ENCODE measurements at regions of chr6 and their contacts with region 1.

Region 1: DNA sequence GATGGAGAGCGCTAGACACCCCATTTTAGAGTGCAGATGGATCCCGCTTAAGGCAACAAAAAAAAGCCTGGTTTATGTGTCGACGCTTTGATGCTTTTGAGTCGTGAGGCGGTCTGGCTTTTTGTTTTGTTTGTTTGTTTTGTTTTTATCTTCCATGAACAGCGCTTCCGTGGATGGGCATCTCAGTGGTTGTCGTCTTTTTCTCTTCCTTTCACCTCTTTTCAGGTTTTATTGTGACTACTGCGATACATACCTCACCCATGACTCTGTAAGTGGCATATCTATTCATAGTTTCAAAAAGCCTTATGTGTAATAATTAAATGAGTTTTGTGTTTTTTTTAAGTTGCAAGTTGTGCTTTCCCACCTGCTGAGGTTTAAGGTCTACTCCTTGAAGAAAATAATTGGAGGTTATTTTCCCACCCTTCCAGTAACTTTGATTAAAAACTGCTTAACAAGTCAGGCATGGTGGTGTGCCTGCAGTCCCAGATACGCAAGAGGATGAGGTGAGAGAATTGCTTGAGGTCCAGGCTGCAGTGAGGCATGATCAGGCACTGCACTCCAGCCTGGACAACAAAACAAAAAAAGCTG is 476 bp downstream of the SNRPC start:
- DNase-seq: no peak
- H3K4me3 Mint-ChIP-seq: no peak overlapping the region
- H3K27ac Mint-ChIP-seq: no peak overlapping the region
- H3K4me1 Mint-ChIP-seq: peaks cover 7% of the 10 kb centered on the region
- H3K27me3 Mint-ChIP-seq: no peaks in the 10 kb centered on the region

Region 2: DNA sequence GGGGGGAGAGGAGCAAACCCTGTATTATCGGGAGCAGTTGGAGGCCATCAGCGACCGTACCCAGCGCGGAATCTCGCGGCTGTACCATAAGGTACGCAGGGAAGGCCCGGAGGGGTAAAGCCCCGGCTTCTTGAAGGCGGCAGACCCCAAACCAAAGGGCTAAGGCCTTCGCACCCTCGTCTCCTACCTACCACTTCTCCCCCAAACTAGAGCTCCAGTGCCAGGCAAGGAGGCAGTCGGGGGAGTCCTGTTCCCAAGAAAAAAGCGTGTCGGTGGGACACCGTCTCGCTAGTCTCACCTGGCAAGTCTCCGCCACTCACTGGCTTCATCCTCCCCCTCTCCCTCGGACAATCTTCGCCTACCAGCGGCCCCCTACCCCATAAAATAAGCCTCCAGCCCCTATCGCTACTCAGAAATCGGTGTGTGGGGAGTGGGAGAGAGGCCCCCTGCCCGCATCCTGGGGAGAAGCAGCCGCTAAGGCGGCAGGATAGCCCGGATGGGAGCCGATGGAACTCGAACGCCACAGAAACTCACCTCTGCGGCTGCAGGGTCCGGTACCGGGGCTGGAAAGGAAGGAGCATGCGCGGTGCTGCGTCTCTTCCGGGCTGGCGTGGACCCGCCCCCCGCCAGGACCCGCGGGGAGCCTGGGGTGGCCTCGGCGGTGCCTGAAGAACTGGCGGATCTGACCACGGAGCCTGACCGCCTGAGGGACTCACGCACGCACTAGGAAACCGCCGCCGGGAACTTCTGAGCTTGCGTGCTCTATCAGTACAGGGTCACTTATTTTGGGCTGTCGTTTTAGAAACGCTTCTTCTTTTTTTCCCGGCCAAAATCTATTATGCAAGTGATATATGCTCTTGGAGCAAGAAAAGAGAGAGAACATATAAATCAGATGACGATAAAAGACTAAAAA is 332.0 kb before region 1 on chr6 and contains the start of gene RPS10:
- intact Hi-C with region 1: loop called (anchors 1 kb)
- DNase-seq: peak; percentile 88
- H3K4me3 Mint-ChIP-seq: peak within 1 kb of the TSS; percentile 99
- H3K27ac Mint-ChIP-seq: peak within 1 kb of the TSS; percentile 99
- H3K4me1 Mint-ChIP-seq: peaks cover 31% of the 10 kb centered on the region
- H3K27me3 Mint-ChIP-seq: peaks cover 4% of the 10 kb centered on the region
- total RNA-seq, gene RPS10: 1,492 and 1,525 TPM in 2 replicates

Region 3: GRCh38 chr6:34656378-34657036 is 101.3 kb before region 1 on chr6:
- intact Hi-C with region 1: loop called (anchors 1 kb)
- DNase-seq: no peak
- H3K4me3 Mint-ChIP-seq: peak overlapping the region; percentile 79
- H3K27ac Mint-ChIP-seq: peak overlapping the region; percentile 97
- H3K4me1 Mint-ChIP-seq: peaks cover 41% of the 10 kb centered on the region
- H3K27me3 Mint-ChIP-seq: no peaks in the 10 kb centered on the region

Region 4: DNA sequence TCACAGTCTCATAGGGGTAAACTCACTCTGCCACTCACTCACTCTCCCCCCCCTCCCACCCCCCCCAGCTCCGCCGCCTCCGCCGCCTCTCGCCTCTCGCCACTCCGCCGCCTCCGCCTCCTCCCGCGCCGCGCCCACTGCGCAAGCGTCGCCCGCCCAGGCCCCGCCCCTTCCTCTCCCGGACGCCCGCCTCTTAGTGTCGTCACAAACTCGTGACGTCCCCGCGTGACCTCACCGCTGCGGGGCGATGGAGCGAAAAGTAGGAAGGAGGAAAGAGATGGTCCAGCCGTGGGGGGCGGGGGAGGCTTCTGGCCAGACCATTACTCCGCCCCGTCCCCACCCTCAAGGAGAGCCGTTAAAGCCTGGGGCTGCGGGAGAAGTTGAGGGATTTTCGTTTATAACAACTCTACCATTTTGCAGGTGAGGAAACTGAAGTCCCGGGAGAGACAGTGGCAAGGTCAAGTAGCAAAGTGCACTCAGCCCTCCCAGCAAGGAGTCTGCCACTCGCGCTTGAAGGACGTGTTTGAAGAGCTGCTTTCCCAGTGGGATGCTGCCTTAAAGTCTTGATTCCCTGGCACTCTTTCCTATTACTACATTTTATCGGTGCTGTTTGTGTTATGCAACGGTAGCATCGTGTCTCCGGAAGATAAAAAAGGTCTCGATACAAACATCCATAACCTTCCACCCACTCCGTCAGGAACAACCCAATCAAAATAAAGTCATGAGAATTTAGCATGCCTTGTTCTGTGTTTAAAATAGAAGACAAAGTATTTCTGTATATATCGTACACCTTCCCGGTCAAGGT is 60.8 kb before region 1 on chr6 and contains the start of gene ILRUN:
- intact Hi-C with region 1: loop called (anchors 1 kb)
- DNase-seq: peak; percentile 93
- H3K4me3 Mint-ChIP-seq: peak within 1 kb of the TSS; percentile 92
- H3K27ac Mint-ChIP-seq: peak within 1 kb of the TSS; percentile 98
- H3K4me1 Mint-ChIP-seq: peaks cover 39% of the 10 kb centered on the region
- H3K27me3 Mint-ChIP-seq: peaks cover 4% of the 10 kb centered on the region
- total RNA-seq, gene ILRUN: 62.7 and 64.4 TPM in 2 replicates

Region 5: GRCh38 chr6:34839666-34840352 is 82.0 kb after region 1 on chr6:
- intact Hi-C with region 1: no loop called
- DNase-seq: no peak
- H3K4me3 Mint-ChIP-seq: no peak overlapping the region
- H3K27ac Mint-ChIP-seq: no peak overlapping the region
- H3K4me1 Mint-ChIP-seq: peaks cover 10% of the 10 kb centered on the region
- H3K27me3 Mint-ChIP-seq: no peaks in the 10 kb centered on the region

Region 6: GRCh38 chr6:35259194-35259947 is 501.6 kb after region 1 on chr6 and contains the start of gene ZNF76:
- intact Hi-C with region 1: loop called (anchors 1 kb)
- DNase-seq: peak; percentile 87
- H3K4me3 Mint-ChIP-seq: peak within 1 kb of the TSS; percentile 96
- H3K27ac Mint-ChIP-seq: peak within 1 kb of the TSS; percentile 88
- H3K4me1 Mint-ChIP-seq: peaks cover 40% of the 10 kb centered on the region
- H3K27me3 Mint-ChIP-seq: no peaks in the 10 kb centered on the region
- total RNA-seq, gene ZNF76: 32.8 and 33.1 TPM in 2 replicates

Measured in activated T-helper 1 cell treated with anti-CD3 and anti-CD28 coated beads, Interleukin-12 subunit alpha, Interleukin-12 subunit beta, Interleukin-2, Interleukin-4 antibody, amounts not matched to agents 30 ng/mL and 10 ng/mL and 1 ng/mL, durations not matched to agents 14 hours and 24 hours and 36 hours (primary cell).